ENCODE measurements at regions of chr7 and their contacts with region 1.

Region 1: GRCh38 chr7:35801392-35802101 is 690 bp downstream of the SEPTIN7 start:
- DNase-seq: peak; percentile 75 to 89 (median 89)
- ATAC-seq: peak; percentile 63 to 71
- H3K4me3 ChIP-seq: peak overlapping the region; percentile 69
- H3K27ac ChIP-seq: peak overlapping the region; percentile 85
- H3K4me1 ChIP-seq: peaks cover 7% of the 10 kb centered on the region
- H3K27me3 ChIP-seq: no peaks in the 10 kb centered on the region

Region 2: DNA sequence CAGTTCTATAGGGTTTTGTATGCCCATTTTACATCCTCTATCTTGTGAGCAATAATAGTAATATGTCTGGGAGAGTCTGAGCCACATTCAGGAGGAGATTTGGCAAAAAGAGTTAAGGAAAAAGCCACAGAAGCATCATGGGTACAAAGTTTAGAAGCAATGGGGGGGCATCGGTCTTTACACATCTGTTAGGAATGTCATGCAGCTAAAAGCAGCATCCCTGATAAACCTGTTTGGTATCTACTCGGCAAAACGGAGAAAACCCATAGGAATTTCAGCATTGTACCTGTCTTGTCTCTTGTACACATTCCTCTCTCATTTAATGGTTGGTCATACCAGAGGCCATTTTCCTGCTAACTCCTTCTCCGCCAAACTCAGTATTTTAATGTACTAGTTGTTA is 94.1 kb before region 1 on chr7:
- intact Hi-C with region 1: loop called in 3 of 4 experiments (anchors 5 to 10 kb)
- DNase-seq: no peak
- ATAC-seq: no peak
- H3K4me3 ChIP-seq: no peak overlapping the region
- H3K27ac ChIP-seq: no peak overlapping the region
- H3K4me1 ChIP-seq: no peaks in the 10 kb centered on the region
- H3K27me3 ChIP-seq: no peaks in the 10 kb centered on the region

Region 3: DNA sequence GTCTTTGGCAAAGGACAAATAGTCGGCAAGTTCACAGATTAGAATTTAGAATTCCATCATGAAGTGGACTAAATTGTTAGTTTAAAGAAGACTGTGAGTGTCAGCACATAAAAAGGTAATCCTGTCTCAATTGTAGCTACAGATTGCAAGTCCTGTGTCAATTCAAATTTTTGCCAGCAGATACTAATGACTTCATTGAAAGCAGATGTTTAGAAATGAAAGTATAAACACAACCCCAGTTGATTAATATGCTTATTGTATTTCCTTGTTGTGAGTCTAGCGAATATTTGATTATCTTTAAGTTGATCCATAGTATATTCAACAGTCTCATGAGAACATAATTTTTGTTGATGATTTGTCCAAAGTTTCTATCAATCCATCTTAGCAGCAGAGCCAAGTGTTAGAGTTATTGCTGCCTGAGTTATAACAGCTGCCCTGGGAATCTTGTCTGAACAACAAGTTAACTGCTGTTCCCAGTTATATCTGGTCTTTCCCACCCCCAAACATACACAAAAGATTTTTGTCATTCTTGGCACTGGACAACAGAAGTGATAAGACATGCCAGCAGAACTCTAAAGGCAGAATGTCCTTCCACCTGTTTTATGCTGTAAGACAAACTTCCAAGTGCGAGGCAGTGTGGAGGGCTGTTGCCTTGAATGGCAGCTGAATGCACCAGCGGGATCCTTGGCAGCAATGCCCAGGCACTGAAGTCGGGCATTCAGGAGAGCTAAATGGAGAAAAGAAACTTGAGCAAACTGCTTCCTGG is 85.3 kb before region 1 on chr7:
- intact Hi-C with region 1: loop called in 2 of 4 experiments (anchors 5 to 10 kb)
- DNase-seq: peak in 1 of 3 donors; percentile 49
- ATAC-seq: peak; percentile 72 to 78
- H3K4me3 ChIP-seq: peak overlapping the region; percentile 51
- H3K27ac ChIP-seq: peak overlapping the region; percentile 30
- H3K4me1 ChIP-seq: peaks cover 5% of the 10 kb centered on the region
- H3K27me3 ChIP-seq: no peaks in the 10 kb centered on the region

Region 4: DNA sequence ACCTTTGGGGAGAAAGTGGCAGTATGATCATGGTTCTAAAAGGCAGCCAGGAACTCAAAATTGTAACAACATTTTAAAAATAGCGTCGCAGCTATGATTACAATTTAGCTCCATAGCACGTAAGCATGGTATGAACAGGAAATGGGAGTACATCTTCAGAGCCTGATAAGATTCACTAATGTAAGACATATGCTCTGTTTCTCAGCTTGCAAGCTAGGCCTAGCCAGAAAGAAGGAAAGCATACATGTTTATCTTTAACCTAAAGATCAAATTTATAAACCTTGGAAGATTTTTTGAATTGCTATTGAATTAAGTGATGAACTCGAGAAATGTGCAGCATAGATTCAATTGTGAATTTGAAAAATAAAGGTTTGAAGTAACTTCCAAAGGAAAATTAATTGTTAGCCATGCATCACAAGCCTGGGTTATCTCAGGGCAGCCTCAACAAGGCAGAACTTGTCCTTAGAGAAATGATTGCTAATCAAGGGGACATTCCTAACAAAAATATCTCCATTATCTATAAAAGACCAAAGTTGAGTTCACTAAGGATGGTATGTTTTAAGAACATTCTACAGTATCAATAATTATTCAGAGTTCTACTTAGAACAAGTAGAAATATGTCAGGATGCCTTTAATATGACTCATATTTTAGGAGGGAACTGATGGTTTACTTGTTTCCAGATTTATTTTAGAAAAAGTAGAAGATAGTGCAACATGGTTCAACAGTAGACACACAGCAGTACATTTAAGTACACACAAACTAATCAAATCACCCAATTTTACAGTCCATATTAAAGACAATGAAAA is 39.5 kb before region 1 on chr7:
- intact Hi-C with region 1: loop called in 1 of 4 experiments (anchors 5 kb)
- DNase-seq: no peak
- ATAC-seq: peak; percentile 48 to 51
- H3K4me3 ChIP-seq: no peak overlapping the region
- H3K27ac ChIP-seq: no peak overlapping the region
- H3K4me1 ChIP-seq: no peaks in the 10 kb centered on the region
- H3K27me3 ChIP-seq: no peaks in the 10 kb centered on the region

Region 5: DNA sequence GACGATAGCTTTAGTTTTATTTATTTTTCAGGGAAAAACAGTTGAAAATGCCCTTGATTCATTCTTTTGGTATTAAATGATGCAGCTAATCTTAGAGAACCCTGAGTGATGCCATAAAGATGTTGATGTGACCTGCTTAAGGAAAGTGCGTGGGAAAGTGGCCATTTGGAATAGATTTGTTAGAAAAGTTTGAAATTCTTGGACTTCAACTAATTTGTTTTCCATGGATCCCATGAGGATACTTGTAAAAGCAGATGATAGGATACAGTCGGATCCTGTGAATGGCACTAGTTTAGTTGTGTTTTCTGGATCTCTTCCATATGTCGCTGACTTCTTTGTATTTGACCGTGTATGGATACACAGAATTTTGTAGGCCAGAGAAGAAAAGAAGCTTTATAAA is 68.3 kb after region 1 on chr7:
- intact Hi-C with region 1: loop called in 1 of 4 experiments (anchors 10 kb)
- DNase-seq: no peak
- ATAC-seq: peak in 1 of 2 donors; percentile 39
- H3K4me3 ChIP-seq: no peak overlapping the region
- H3K27ac ChIP-seq: no peak overlapping the region
- H3K4me1 ChIP-seq: peaks cover 1% of the 10 kb centered on the region
- H3K27me3 ChIP-seq: no peaks in the 10 kb centered on the region

Region 6: DNA sequence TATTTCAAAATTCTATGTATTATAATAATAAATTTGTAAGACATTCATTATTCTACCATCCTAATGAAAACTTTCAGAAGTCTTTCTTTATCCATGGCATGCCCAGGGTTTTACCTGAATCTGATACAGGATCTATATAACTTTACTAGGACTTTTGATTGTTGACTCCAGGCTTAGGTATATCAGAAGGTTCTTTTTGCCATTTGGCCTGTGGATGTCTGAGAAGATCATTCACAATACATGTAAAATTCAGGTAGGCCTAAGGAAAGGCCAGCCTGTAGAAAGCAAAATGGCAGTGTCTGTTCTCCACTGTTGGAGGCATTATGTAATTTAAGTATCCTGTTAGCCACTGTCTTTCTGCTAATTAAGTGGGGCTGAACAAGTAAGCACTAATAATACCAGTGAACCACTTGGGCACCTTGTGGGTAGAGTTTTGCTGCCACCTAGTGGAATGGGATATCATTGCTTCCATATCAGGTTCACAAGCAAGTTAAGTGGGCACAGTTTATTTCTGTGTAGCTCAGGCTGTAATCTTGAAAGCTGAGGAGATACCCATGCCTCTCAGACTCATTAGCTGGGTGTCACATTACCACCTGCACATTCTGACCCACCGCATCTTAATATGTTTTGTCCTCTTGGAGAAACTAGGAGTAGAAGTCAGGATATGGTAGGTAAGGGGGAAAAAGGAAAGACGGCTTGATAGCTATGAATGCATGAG is 104.8 kb after region 1 on chr7:
- intact Hi-C with region 1: loop called in 3 of 4 experiments (anchors 10 kb)
- DNase-seq: peak in 1 of 3 donors; percentile 26
- ATAC-seq: peak; percentile 79 to 90
- H3K4me3 ChIP-seq: no peak overlapping the region
- H3K27ac ChIP-seq: no peak overlapping the region
- H3K4me1 ChIP-seq: peaks cover 3% of the 10 kb centered on the region
- H3K27me3 ChIP-seq: no peaks in the 10 kb centered on the region

Region 7: GRCh38 chr7:36726806-36727503 is 925.4 kb after region 1 on chr7:
- intact Hi-C with region 1: no loop called
- DNase-seq: no peak
- ATAC-seq: peak in 1 of 2 donors; percentile 50
- H3K4me3 ChIP-seq: no peak overlapping the region
- H3K27ac ChIP-seq: no peak overlapping the region
- H3K4me1 ChIP-seq: no peaks in the 10 kb centered on the region
- H3K27me3 ChIP-seq: no peaks in the 10 kb centered on the region

Measured in right cardiac atrium (tissue), 5 donors.